Activated CD4-positive, alpha-beta memory T cell treated with anti-CD3 and anti-CD28 coated beads for 36 hours (primary cell): ENCODE measurements at regions of chr15 and their contacts with region 1.

Region 1: GRCh38 chr15:42548253-42549031 is at the starts of genes HAUS2 and LRRC57:
- DNase-seq: peak; percentile 92
- H3K4me3 Mint-ChIP-seq: peak within 1 kb of the TSS; percentile 95
- H3K27ac Mint-ChIP-seq: peak within 1 kb of the TSS; percentile 89
- H3K4me1 Mint-ChIP-seq: peaks cover 57% of the 10 kb centered on the region
- H3K27me3 Mint-ChIP-seq: no peaks in the 10 kb centered on the region
- total RNA-seq, gene HAUS2: 44.9 to 45.1 TPM
- total RNA-seq, gene LRRC57: 15.7 to 17.2 TPM

Region 2: DNA sequence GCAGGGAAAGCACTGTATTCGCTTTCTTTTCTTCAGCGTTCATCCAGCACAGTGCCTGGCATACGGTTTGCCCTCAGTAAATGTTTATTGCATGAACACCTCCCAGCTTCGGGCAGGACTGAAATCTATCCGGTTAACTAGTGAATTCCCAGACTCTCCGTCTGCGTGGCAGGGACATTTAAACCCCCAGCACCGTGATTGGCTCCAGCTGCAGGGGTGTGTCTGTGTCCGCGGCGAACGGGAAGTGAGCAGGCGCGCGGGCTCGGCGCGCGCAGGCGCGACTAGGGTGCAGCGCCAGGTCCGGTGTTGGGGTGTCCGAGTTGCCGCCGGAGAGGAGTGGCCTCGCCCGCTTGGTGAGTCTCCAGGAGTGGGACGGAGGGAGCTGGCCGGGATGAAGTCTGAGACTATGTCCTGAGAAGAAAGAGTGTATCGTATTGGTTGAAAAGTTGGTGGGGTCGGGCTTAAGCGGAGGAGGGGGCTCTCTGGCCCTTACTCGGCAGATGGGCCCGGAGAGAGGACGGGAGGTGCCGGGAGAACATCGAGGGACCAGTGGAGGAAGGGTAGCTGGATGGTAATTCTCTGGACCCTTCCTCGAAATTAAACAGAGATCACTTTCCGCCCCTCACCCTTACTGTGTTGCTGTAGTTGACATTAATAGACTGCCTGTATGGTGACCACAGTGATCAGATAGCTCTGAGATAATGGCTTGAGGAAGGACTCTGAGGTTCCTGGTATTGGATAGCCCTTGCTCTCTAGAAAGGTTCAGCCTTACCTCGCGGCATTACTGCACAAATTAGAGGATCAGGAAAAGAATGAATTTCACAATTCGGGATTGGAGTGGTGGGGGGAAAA is 52.9 kb before region 1 on chr15 and contains the start of gene SNAP23:
- CTCF ChIA-PET with region 1: no interaction called
- POLR2A ChIA-PET with region 1: interaction called, 10 read pairs
- intact Hi-C with region 1: loop called (anchors 2 kb)
- DNase-seq: peak; percentile 91
- H3K4me3 Mint-ChIP-seq: peak within 1 kb of the TSS; percentile 95
- H3K27ac Mint-ChIP-seq: peak within 1 kb of the TSS; percentile 88
- H3K4me1 Mint-ChIP-seq: peaks cover 67% of the 10 kb centered on the region
- H3K27me3 Mint-ChIP-seq: no peaks in the 10 kb centered on the region
- total RNA-seq, gene SNAP23: 43.1 to 46.8 TPM

Region 3: DNA sequence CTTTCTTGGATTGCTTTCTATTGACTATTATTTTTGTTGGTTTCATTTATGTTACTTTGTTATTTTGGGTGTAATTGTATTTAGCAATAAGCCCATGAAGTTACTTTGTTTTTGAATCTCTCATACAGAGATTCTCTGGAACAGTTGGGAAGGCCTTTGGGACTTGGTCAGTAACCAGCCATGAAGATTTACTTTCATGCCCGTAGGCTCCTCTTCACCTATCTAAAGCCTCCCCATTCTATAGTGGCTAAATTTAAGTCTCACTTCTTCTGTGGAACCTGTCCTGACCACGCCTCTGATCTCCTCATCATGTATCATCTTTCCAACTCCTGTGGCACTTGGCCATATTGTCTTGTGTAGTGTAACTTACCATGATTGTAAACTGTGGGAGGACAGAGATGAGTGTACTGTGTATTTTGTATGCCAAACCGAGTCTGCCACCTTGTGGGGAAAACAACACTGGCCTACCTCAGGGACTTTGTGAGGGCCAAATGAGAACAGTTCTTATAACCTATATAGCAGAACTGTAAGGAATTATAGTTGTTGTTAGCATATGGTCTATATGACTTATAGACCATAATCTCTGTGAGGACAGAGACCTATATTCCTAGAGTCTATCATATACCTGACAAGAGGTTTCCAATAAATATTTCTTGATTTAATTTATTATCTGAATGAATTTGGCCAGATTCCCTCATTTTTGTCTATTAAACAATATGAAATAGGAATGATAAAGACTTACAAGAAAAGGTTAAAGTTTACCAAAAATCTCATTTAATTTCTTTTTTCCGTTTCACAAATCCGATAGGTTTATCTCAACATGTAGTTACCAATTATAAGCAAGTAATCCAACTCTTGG is 102.0 kb after region 1 on chr15:
- CTCF ChIA-PET with region 1: no interaction called
- POLR2A ChIA-PET with region 1: no interaction called
- intact Hi-C with region 1: loop called (anchors 1 kb)
- DNase-seq: peak; percentile 76
- H3K4me3 Mint-ChIP-seq: no peak overlapping the region
- H3K27ac Mint-ChIP-seq: no peak overlapping the region
- H3K4me1 Mint-ChIP-seq: peaks cover 4% of the 10 kb centered on the region
- H3K27me3 Mint-ChIP-seq: no peaks in the 10 kb centered on the region